Heart right ventricle (tissue), 16 donors: ENCODE measurements at regions of chr15 and their contacts with region 1.

Region 1: GRCh38 chr15:76038512-76038911 is 21.3 kb upstream of the TMEM266 start:
- DNase-seq: no peak
- ATAC-seq: no peak
- H3K4me3 ChIP-seq: no peak overlapping the region
- H3K27ac ChIP-seq: no peak overlapping the region
- H3K4me1 ChIP-seq: no peaks in the 10 kb centered on the region
- H3K27me3 ChIP-seq: peaks cover 0 to 27% (median 7%) of the 10 kb centered on the region in 7 donors
- CTCF ChIP-seq: no peak

Region 2: GRCh38 chr15:75966073-75966472 is 72.4 kb before region 1 on chr15:
- intact Hi-C with region 1: loop called in 1 of 10 experiments (anchors 10 kb)
- DNase-seq: no peak
- ATAC-seq: no peak
- H3K4me3 ChIP-seq: no peak overlapping the region
- H3K27ac ChIP-seq: no peak overlapping the region
- H3K4me1 ChIP-seq: no peaks in the 10 kb centered on the region
- H3K27me3 ChIP-seq: peaks cover 0 to 4% (median 0%) of the 10 kb centered on the region in 7 donors
- CTCF ChIP-seq: no peak

Region 3: DNA sequence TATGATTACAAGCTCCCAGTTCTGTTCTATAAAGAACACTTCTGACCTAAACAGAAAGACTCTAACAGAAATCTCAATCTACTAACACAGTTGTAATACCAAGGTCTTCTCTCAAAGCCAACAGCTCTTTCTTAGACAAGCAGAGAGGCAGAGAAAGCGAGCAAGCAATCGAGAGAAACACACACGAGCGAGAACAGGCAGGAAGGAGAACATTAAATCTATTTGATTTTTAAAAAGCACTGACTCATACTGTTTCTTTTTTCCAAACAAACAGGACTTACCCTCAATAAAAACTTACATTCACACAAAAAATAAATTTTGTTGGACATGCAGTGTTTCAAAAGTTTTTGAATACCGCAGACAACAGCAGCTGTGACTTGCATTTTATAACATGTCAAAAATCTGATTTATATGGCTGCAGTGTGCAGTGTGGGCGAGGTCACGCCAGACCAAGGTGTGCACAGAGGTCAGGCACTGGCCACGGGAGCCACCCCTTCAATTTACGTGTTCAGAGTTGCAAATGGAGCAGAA is 26.4 kb before region 1 on chr15 and contains the start of gene NRG4:
- intact Hi-C with region 1: no loop called
- DNase-seq: no peak
- ATAC-seq: no peak
- H3K4me3 ChIP-seq: no peak within 1 kb of the TSS
- H3K27ac ChIP-seq: no peak within 1 kb of the TSS
- H3K4me1 ChIP-seq: peaks cover 0 to 4% (median 0%) of the 10 kb centered on the region in 9 donors
- H3K27me3 ChIP-seq: peaks cover 0 to 26% (median 10%) of the 10 kb centered on the region in 7 donors
- CTCF ChIP-seq: no peak
- total RNA-seq, gene NRG4: 0.19 TPM in 1 of 10 donors, not detected in the others